MCF 10A (cell line): ENCODE measurements at regions of chr1 and their contacts with region 1.

Region 1: GRCh38 chr1:173714759-173715537 is at the start of gene KLHL20:
- DNase-seq: peak; percentile 97
- H3K4me3 Mint-ChIP-seq: peak within 1 kb of the TSS; percentile 80
- H3K27ac Mint-ChIP-seq: peak within 1 kb of the TSS; percentile 87
- H3K4me1 Mint-ChIP-seq: peaks cover 7% of the 10 kb centered on the region
- H3K27me3 Mint-ChIP-seq: peaks cover 12% of the 10 kb centered on the region
- CTCF ChIP-seq: no peak
- total RNA-seq, gene KLHL20: 36.7 and 44.3 TPM in 2 replicates

Region 2: GRCh38 chr1:173429471-173430402 is 285.2 kb before region 1 on chr1:
- CTCF ChIA-PET with region 1: interaction called, 7 read pairs
- POLR2A ChIA-PET with region 1: interaction called, 53 read pairs
- intact Hi-C with region 1: loop called (anchors 1 kb)
- DNase-seq: peak; percentile 91
- H3K4me3 Mint-ChIP-seq: peak overlapping the region; percentile 60
- H3K27ac Mint-ChIP-seq: peak overlapping the region; percentile 93
- H3K4me1 Mint-ChIP-seq: peaks cover 43% of the 10 kb centered on the region
- H3K27me3 Mint-ChIP-seq: no peaks in the 10 kb centered on the region
- CTCF ChIP-seq: peak; percentile 39

Region 3: DNA sequence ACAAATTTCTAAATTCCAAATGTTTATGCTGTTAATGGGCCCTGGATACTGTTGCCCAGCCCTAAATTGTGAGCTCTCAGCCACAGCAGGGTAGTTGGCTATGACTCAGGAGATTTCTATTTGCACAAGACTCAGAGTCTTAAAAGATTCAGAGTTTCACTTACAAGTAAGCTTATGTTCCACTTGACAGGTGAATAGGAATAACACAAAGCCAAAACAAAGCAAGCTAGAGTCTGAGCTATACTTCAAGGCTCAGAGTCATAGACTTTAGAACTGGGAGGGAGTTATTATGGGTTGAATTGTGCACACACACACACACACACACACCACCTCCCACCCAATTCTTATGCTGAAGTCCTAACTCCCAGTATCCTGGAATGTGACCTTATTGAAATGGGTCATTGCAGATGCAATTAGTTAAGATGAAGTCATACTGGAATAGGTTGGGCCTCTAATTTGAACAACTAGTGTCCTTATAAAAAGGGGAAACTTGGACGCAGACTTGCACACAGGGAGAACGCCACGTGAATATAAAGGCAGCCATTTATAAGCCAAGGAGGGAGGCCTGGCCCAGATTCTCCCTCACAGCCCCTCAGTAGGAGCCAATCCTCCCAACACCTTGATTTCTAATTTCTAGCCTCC is 207.6 kb before region 1 on chr1:
- CTCF ChIA-PET with region 1: interaction called, 4 read pairs
- POLR2A ChIA-PET with region 1: interaction called, 32 read pairs
- intact Hi-C with region 1: loop called (anchors 10 kb)
- DNase-seq: peak; percentile 72
- H3K4me3 Mint-ChIP-seq: peak overlapping the region; percentile 24
- H3K27ac Mint-ChIP-seq: peak overlapping the region; percentile 76
- H3K4me1 Mint-ChIP-seq: peaks cover 26% of the 10 kb centered on the region
- H3K27me3 Mint-ChIP-seq: no peaks in the 10 kb centered on the region
- CTCF ChIP-seq: no peak

Region 4: GRCh38 chr1:173536254-173536653 is 178.7 kb before region 1 on chr1:
- CTCF ChIA-PET with region 1: interaction called, 4 read pairs
- POLR2A ChIA-PET with region 1: interaction called, 15 read pairs
- intact Hi-C with region 1: no loop called
- DNase-seq: no peak
- H3K4me3 Mint-ChIP-seq: no peak overlapping the region
- H3K27ac Mint-ChIP-seq: no peak overlapping the region
- H3K4me1 Mint-ChIP-seq: no peaks in the 10 kb centered on the region
- H3K27me3 Mint-ChIP-seq: no peaks in the 10 kb centered on the region
- CTCF ChIP-seq: no peak

Region 5: DNA sequence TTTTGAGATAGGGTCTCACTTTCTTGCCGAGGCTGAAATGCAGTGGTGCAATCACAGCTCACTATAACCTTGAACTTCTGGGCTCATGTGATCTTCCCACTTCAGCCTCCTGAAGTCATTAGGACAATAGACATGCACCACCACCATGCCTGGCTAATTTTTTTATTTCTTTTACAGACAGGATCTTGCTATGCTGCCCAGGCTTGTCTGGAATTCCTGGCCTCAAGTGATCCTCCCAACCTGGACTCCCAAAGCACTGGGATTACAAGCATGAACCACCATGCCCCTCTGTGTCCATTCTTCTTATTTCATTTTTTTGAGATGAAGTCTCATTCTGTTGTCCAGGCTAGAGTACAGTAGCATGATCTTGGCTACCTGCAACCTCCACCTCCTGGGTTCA is 12.2 kb before region 1 on chr1:
- CTCF ChIA-PET with region 1: interaction called, 4 read pairs
- POLR2A ChIA-PET with region 1: interaction called, 12 read pairs
- intact Hi-C with region 1: no loop called
- DNase-seq: no peak
- H3K4me3 Mint-ChIP-seq: no peak overlapping the region
- H3K27ac Mint-ChIP-seq: no peak overlapping the region
- H3K4me1 Mint-ChIP-seq: no peaks in the 10 kb centered on the region
- H3K27me3 Mint-ChIP-seq: peaks cover 26% of the 10 kb centered on the region
- CTCF ChIP-seq: no peak

Region 6: GRCh38 chr1:173824331-173825081 is 109.6 kb after region 1 on chr1 and contains the starts of genes CENPL and DARS2:
- CTCF ChIA-PET with region 1: interaction called, 6 read pairs
- POLR2A ChIA-PET with region 1: interaction called, 42 read pairs
- intact Hi-C with region 1: loop called (anchors 1 kb)
- DNase-seq: peak; percentile 100
- H3K4me3 Mint-ChIP-seq: peak within 1 kb of the TSS; percentile 97
- H3K27ac Mint-ChIP-seq: peak within 1 kb of the TSS; percentile 98
- H3K4me1 Mint-ChIP-seq: peaks cover 39% of the 10 kb centered on the region
- H3K27me3 Mint-ChIP-seq: no peaks in the 10 kb centered on the region
- CTCF ChIP-seq: no peak
- total RNA-seq, gene CENPL: 14.1 and 24.5 TPM in 2 replicates
- total RNA-seq, gene DARS2: 34.6 and 40.4 TPM in 2 replicates

Region 7: DNA sequence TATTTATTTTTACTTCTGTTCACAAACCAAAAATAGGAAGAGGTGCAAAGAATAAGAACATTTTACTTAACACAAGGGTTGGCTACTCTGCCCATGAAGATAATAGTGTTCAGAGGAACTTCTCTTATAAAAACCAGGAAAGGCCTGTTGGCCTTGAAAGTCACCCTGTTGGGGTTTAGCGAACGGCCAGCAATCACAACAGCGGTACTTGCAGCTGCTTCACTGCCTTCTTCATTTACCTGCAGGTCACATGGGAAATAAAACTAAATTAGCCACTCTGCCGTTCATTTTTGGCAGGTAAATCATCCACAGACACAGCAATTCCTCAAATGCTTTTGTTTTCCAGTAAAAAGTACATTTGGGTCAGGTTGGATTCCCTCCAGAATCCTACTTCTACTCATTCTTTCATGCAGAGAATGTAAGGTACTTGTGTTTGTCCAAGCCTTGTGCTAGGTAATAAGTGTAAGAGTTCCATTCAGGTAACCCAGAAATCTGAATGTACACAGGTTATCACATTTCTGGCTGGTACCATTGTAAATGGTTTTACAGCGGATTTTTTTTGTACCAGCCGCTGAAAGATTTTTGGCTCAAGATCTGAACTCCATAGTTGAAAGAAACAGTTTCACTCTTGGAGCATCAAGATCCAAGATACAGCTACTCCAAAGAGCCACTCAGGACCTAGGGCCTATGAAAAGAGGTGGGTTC is 189.0 kb after region 1 on chr1:
- CTCF ChIA-PET with region 1: no interaction called
- POLR2A ChIA-PET with region 1: no interaction called
- intact Hi-C with region 1: no loop called
- DNase-seq: no peak
- H3K4me3 Mint-ChIP-seq: no peak overlapping the region
- H3K27ac Mint-ChIP-seq: no peak overlapping the region
- H3K4me1 Mint-ChIP-seq: no peaks in the 10 kb centered on the region
- H3K27me3 Mint-ChIP-seq: no peaks in the 10 kb centered on the region
- CTCF ChIP-seq: no peak

Region 8: GRCh38 chr1:174068000-174068399 is 353.1 kb after region 1 on chr1:
- CTCF ChIA-PET with region 1: no interaction called
- POLR2A ChIA-PET with region 1: no interaction called
- intact Hi-C with region 1: no loop called
- DNase-seq: peak; percentile 54
- H3K4me3 Mint-ChIP-seq: no peak overlapping the region
- H3K27ac Mint-ChIP-seq: no peak overlapping the region
- H3K4me1 Mint-ChIP-seq: peaks cover 6% of the 10 kb centered on the region
- H3K27me3 Mint-ChIP-seq: peaks cover 10% of the 10 kb centered on the region
- CTCF ChIP-seq: no peak

Region 9: GRCh38 chr1:174497478-174497877 is 782.5 kb after region 1 on chr1:
- CTCF ChIA-PET with region 1: no interaction called
- POLR2A ChIA-PET with region 1: no interaction called
- intact Hi-C with region 1: no loop called
- DNase-seq: peak; percentile 12
- H3K4me3 Mint-ChIP-seq: no peak overlapping the region
- H3K27ac Mint-ChIP-seq: peak overlapping the region; percentile 8
- H3K4me1 Mint-ChIP-seq: peaks cover 5% of the 10 kb centered on the region
- H3K27me3 Mint-ChIP-seq: no peaks in the 10 kb centered on the region
- CTCF ChIP-seq: no peak